ENCODE measurements at regions of chr19 and their contacts with region 1.

Region 1: GRCh38 chr19:18058208-18059030 is 28.3 kb downstream of the IL12RB1 start:
- DNase-seq: peak; percentile 53 to 94 (median 86)

Region 2: GRCh38 chr19:18007044-18007916 is 51.1 kb before region 1 on chr19:
- intact Hi-C with region 1: loop called (anchors 1 kb)
- DNase-seq: peak; percentile 71 to 95 (median 89)

Measured in head of caudate nucleus (tissue), 42 donors.